Naive thymus-derived CD4-positive, alpha-beta T cell (primary cell): ENCODE measurements at regions of chr6 and their contacts with region 1.

Region 1: DNA sequence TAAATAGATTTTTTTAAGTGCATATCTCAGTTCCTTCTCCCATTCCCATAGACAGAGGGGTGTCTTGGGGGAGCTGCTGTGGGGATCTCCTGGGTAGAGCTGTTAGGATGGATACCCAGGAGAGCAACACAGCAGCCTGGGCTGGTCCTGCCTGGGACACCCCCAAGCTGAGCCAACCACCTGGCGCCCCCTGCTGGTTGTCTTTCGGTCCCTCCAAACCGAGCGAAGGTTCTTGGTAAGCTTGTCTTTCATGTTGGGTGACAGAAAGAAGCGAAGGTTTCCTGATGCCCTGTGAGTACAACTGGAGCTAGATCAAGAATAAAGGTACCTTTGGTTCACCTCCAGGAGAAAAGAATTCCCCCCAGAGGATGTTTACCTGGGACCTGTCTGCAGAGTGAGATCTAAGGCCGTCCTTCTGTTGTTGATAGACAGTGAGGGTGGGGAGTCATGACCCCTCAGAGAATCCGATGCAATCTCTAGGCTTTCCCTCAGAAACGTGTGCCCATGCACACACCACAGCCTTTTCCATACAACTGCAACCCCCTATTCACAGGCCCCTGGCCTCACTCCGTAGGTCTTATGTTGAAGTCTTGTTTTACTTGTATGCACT is 50.8 kb downstream of the SNX9 start:
- DNase-seq: peak; percentile 65 to 84 (median 80)
- ATAC-seq: peak; percentile 87
- H3K4me3 ChIP-seq: no peak overlapping the region
- H3K4me3 Mint-ChIP-seq: peak overlapping the region in 2 of 10 donors; percentile 14 to 21
- H3K27ac ChIP-seq: no peak overlapping the region
- H3K27ac Mint-ChIP-seq: peak overlapping the region in 7 of 9 donors; percentile 26 to 87 (median 56)
- H3K4me1 ChIP-seq: peaks cover 0 to 25% of the 10 kb centered on the region in 2 donors
- H3K4me1 Mint-ChIP-seq: peaks cover 4 to 47% (median 44%) of the 10 kb centered on the region in 7 donors
- H3K27me3 ChIP-seq: no peaks in the 10 kb centered on the region
- H3K27me3 Mint-ChIP-seq: no peaks in the 10 kb centered on the region

Region 2: GRCh38 chr6:157667211-157668008 is 206.4 kb before region 1 on chr6:
- CTCF ChIA-PET with region 1: interaction called, 5 read pairs
- POLR2A ChIA-PET with region 1: no interaction called
- intact Hi-C with region 1: loop called in 1 of 2 experiments (anchors 1 kb)
- DNase-seq: peak in 8 of 9 donors; percentile 28 to 67 (median 54)
- ATAC-seq: peak; percentile 83
- H3K4me3 ChIP-seq: no peak overlapping the region
- H3K4me3 Mint-ChIP-seq: peak overlapping the region in 4 of 10 donors; percentile 1 to 35 (median 10)
- H3K27ac ChIP-seq: no peak overlapping the region
- H3K27ac Mint-ChIP-seq: peak overlapping the region in 7 of 9 donors; percentile 4 to 38 (median 19)
- H3K4me1 ChIP-seq: peaks cover 0 to 15% of the 10 kb centered on the region in 2 donors
- H3K4me1 Mint-ChIP-seq: peaks cover 7 to 31% (median 23%) of the 10 kb centered on the region in 7 donors
- H3K27me3 ChIP-seq: no peaks in the 10 kb centered on the region
- H3K27me3 Mint-ChIP-seq: peaks cover 0 to 6% (median 0%) of the 10 kb centered on the region in 5 donors

Region 3: DNA sequence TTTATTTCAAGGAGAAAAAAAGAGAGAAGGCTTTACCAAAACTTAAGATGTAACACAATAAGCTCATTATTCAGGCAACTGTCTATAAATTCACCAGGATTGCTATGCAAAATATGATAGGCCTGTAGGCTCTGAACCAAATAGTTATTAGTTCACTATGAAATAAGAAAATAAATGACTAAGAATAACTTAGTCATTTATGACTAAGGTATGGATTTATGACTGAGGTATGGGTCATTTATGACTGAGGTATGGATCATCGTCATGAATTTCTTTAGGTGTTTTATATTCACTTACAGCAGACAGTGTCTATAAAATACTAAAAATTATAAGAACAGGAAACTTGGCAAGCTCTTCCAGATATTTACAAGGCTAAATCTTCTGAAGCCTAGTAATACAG is 102.9 kb before region 1 on chr6:
- CTCF ChIA-PET with region 1: interaction called, 11 read pairs
- POLR2A ChIA-PET with region 1: interaction called, 3 read pairs
- intact Hi-C with region 1: no loop called
- DNase-seq: no peak
- ATAC-seq: no peak
- H3K4me3 ChIP-seq: no peak overlapping the region
- H3K4me3 Mint-ChIP-seq: no peak overlapping the region
- H3K27ac ChIP-seq: no peak overlapping the region
- H3K27ac Mint-ChIP-seq: no peak overlapping the region
- H3K4me1 ChIP-seq: peaks cover 0 to 19% of the 10 kb centered on the region in 2 donors
- H3K4me1 Mint-ChIP-seq: peaks cover 22 to 63% (median 50%) of the 10 kb centered on the region in 7 donors
- H3K27me3 ChIP-seq: no peaks in the 10 kb centered on the region
- H3K27me3 Mint-ChIP-seq: peaks cover 0 to 50% (median 4%) of the 10 kb centered on the region in 5 donors

Region 4: GRCh38 chr6:157823001-157823527 is 50.8 kb before region 1 on chr6 and contains the start of gene SNX9:
- CTCF ChIA-PET with region 1: interaction called, 8 read pairs
- POLR2A ChIA-PET with region 1: no interaction called
- intact Hi-C with region 1: loop called (anchors 1 to 2 kb)
- DNase-seq: peak in 8 of 9 donors; percentile 27 to 74 (median 56)
- ATAC-seq: peak; percentile 77
- H3K4me3 ChIP-seq: peak within 1 kb of the TSS; percentile 60
- H3K4me3 Mint-ChIP-seq: peak within 1 kb of the TSS; percentile 88 to 100 (median 96)
- H3K27ac ChIP-seq: peak within 1 kb of the TSS; percentile 96
- H3K27ac Mint-ChIP-seq: peak within 1 kb of the TSS; percentile 95 to 100 (median 99)
- H3K4me1 ChIP-seq: peaks cover 9 to 16% of the 10 kb centered on the region in 2 donors
- H3K4me1 Mint-ChIP-seq: peaks cover 15 to 70% (median 57%) of the 10 kb centered on the region in 7 donors
- H3K27me3 ChIP-seq: no peaks in the 10 kb centered on the region
- H3K27me3 Mint-ChIP-seq: peaks cover 0 to 42% (median 0%) of the 10 kb centered on the region in 5 donors
- total RNA-seq, gene SNX9: 13.4 to 39.2 (median 36.4) TPM

Region 5: GRCh38 chr6:157898169-157898568 is 24.3 kb after region 1 on chr6:
- CTCF ChIA-PET with region 1: interaction called, 12 read pairs
- POLR2A ChIA-PET with region 1: interaction called, 3 read pairs
- intact Hi-C with region 1: no loop called
- DNase-seq: peak in 7 of 9 donors; percentile 39 to 68 (median 48)
- ATAC-seq: peak; percentile 55
- H3K4me3 ChIP-seq: no peak overlapping the region
- H3K4me3 Mint-ChIP-seq: no peak overlapping the region
- H3K27ac ChIP-seq: no peak overlapping the region
- H3K27ac Mint-ChIP-seq: peak overlapping the region in 8 of 9 donors; percentile 6 to 92 (median 50)
- H3K4me1 ChIP-seq: peaks cover 0 to 12% of the 10 kb centered on the region in 2 donors
- H3K4me1 Mint-ChIP-seq: peaks cover 5 to 40% (median 26%) of the 10 kb centered on the region in 7 donors
- H3K27me3 ChIP-seq: no peaks in the 10 kb centered on the region
- H3K27me3 Mint-ChIP-seq: no peaks in the 10 kb centered on the region

Region 6: GRCh38 chr6:158789434-158789917 is 915.6 kb after region 1 on chr6:
- CTCF ChIA-PET with region 1: no interaction called
- POLR2A ChIA-PET with region 1: no interaction called
- intact Hi-C with region 1: no loop called
- DNase-seq: peak in 8 of 9 donors; percentile 45 to 82 (median 76)
- ATAC-seq: peak; percentile 89
- H3K4me3 ChIP-seq: peak overlapping the region; percentile 29
- H3K4me3 Mint-ChIP-seq: peak overlapping the region; percentile 66 to 88 (median 82)
- H3K27ac ChIP-seq: peak overlapping the region; percentile 72
- H3K27ac Mint-ChIP-seq: peak overlapping the region; percentile 87 to 99 (median 98)
- H3K4me1 ChIP-seq: peaks cover 15 to 47% of the 10 kb centered on the region in 2 donors
- H3K4me1 Mint-ChIP-seq: peaks cover 36 to 66% (median 60%) of the 10 kb centered on the region in 7 donors
- H3K27me3 ChIP-seq: no peaks in the 10 kb centered on the region
- H3K27me3 Mint-ChIP-seq: no peaks in the 10 kb centered on the region